ENCODE measurements at regions of chr2 and their contacts with region 1.

Region 1: GRCh38 chr2:162153608-162154224 is 1.7 kb upstream of the GCG start:
- DNase-seq: peak; percentile 44
- H3K4me3 ChIP-seq: no peak overlapping the region; a peak in 1 of 4 replicates
- H3K27ac ChIP-seq: no peak overlapping the region
- H3K4me1 ChIP-seq: peaks cover 0 to 2% of the 10 kb centered on the region in 2 experiments; a peak in 2 of 4 replicates
- H3K27me3 ChIP-seq: no peaks in the 10 kb centered on the region
- CTCF ChIP-seq: peak; percentile 75
- EP300 ChIP-seq: no peak
- RAD21 ChIP-seq: peak; percentile 67

Region 2: DNA sequence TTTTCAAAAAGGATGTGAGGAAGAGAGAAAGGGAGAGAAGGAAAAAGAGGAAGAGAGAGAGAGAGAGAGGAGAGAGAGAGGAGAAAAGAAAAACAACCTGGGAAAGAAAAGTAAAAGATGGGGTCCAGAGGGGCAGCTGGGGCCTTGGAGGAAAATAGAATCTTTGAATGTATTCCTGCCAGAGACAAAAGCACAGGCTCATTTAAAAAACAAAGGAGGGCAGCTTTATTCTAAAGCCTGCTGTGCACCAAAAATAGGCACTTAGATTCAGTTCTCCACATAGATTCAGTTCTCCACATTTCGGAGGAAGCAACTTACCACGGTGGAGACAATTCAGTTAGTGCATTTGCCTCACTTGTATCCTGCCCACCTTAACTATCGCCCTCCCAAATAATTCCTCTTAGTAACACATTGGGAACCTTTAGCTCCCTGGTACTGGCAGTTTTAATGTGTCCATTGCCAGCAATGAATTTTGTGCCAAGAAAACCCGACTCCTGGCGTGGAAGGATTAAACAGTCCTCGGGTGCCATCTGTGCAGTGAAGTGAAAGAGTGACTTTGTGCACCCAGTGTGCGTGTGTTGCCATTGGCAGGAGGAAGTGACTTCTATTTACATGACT is 151.0 kb before region 1 on chr2:
- CTCF ChIA-PET with region 1: no interaction called
- POLR2A ChIA-PET with region 1: no interaction called
- DNase-seq: no peak
- H3K4me3 ChIP-seq: no peak overlapping the region
- H3K27ac ChIP-seq: no peak overlapping the region
- H3K4me1 ChIP-seq: no peaks in the 10 kb centered on the region
- H3K27me3 ChIP-seq: no peaks in the 10 kb centered on the region
- CTCF ChIP-seq: no peak
- EP300 ChIP-seq: no peak
- RAD21 ChIP-seq: no peak

Region 3: GRCh38 chr2:162184821-162185446 is 31.2 kb after region 1 on chr2:
- CTCF ChIA-PET with region 1: interaction called, 10 read pairs
- POLR2A ChIA-PET with region 1: no interaction called
- DNase-seq: no peak
- H3K4me3 ChIP-seq: no peak overlapping the region
- H3K27ac ChIP-seq: no peak overlapping the region
- H3K4me1 ChIP-seq: no peaks in the 10 kb centered on the region
- H3K27me3 ChIP-seq: no peaks in the 10 kb centered on the region
- CTCF ChIP-seq: no peak
- EP300 ChIP-seq: no peak
- RAD21 ChIP-seq: no peak

Measured in SK-N-SH (cell line).